Right ventricle myocardium inferior (tissue), 1 donor: ENCODE measurements at regions of chr2 and their contacts with region 1.

Region 1: GRCh38 chr2:127591221-127591923 is 54.6 kb upstream of the GPR17 start:
- DNase-seq: no peak
- ATAC-seq: peak; percentile 83

Region 2: DNA sequence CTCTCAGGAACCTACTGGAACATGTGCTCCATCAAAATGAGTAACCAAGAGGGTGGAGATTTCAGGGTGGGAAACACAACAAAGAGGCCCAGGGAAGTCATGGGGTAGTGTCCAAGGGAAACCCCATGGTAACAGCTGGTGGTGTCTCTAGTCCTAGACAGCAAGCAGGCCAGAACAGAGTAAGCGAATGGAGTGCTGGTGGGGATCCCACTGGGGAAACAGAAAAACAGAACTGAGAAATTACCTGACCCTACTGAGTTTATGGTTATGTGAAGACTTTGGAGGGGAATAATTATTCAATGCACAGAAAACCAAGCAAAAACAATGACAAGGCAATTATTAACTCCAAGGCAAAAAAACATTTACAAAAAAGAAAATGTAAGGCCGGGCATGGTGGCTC is 314.3 kb before region 1 on chr2:
- intact Hi-C with region 1: no loop called
- DNase-seq: no peak
- ATAC-seq: no peak

Region 3: GRCh38 chr2:127614736-127615135 is 23.4 kb after region 1 on chr2:
- intact Hi-C with region 1: no loop called
- DNase-seq: no peak
- ATAC-seq: no peak

Region 4: DNA sequence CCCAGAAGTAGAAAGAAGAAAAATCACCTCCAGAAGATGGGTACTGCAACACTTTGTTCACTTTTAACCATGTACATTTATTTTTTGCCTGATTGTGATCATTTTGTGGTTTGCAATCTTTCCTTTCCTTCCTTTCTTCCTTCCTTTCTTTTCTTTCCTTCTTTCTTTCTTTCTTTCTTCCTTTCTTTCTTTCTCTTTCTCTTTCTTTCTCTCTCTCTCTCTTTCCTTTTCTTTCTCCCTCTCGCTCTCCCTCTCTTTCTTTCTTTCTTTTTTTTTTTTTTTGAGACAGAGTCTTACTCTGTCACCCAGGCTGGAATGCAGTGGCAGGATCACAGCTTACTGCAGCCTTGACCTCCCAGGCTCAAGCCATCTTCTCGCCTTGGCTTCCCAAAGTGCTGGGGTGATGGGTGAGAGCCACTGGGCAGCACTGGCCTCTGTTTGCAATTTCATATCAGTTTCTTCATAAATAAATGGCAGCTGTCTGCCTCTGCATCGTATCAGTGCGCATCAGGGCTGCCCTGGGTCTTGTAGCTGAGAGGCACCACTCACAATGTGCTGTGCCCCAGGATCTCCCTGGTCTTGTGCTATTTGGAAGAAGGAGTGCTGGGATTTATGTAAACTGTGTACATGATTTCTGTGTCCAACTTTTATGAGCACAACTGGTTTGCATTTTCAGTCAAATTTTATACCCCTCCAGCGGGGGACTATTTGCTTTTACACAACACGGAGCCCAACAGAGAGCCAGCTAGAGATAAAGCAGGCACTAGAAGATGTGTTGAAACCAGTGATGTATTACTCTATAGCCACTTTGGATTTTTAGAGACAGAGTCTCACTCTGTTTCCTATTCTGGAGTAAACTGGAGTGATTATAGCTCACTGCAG is 90.8 kb after region 1 on chr2:
- intact Hi-C with region 1: loop called (anchors 1 kb)
- DNase-seq: no peak
- ATAC-seq: no peak

Region 5: DNA sequence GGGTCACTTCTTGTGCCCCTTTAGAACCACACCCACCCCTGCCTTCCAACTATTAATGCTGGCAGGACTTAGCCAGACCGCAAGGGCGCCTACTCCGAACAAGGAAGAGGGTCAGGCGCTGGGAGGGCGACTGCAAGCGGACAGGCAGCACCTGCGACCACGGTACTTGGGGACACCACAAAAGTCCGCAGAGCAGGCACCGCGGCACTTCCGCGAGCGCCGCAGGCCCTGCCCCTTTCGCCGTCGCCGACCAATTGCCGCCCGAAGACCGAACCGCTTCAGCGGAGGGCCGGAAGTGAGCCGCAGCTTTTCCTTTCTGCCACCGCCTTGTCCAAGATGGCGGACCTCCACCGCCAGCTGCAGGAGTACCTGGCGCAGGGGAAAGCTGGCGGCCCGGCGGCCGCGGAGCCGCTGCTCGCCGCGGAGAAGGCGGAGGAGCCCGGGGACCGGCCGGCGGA is 109.8 kb after region 1 on chr2 and contains the start of gene SFT2D3:
- intact Hi-C with region 1: loop called (anchors 5 kb)
- DNase-seq: peak; percentile 96
- ATAC-seq: peak; percentile 92
- total RNA-seq, gene SFT2D3: 3.1 TPM

Region 6: GRCh38 chr2:127820080-127820668 is 228.8 kb after region 1 on chr2:
- intact Hi-C with region 1: no loop called
- DNase-seq: no peak
- ATAC-seq: no peak